ENCODE measurements at regions of chr12 and their contacts with region 1.

Region 1: GRCh38 chr12:76586764-76587395 is 27.3 kb upstream of the OSBPL8 start:
- DNase-seq: peak; percentile 43
- H3K4me3 ChIP-seq: no peak overlapping the region
- H3K27ac ChIP-seq: no peak overlapping the region
- H3K4me1 ChIP-seq: peaks cover 7% of the 10 kb centered on the region
- H3K27me3 ChIP-seq: no peaks in the 10 kb centered on the region
- CTCF ChIP-seq: peak; percentile 73 to 74

Region 2: DNA sequence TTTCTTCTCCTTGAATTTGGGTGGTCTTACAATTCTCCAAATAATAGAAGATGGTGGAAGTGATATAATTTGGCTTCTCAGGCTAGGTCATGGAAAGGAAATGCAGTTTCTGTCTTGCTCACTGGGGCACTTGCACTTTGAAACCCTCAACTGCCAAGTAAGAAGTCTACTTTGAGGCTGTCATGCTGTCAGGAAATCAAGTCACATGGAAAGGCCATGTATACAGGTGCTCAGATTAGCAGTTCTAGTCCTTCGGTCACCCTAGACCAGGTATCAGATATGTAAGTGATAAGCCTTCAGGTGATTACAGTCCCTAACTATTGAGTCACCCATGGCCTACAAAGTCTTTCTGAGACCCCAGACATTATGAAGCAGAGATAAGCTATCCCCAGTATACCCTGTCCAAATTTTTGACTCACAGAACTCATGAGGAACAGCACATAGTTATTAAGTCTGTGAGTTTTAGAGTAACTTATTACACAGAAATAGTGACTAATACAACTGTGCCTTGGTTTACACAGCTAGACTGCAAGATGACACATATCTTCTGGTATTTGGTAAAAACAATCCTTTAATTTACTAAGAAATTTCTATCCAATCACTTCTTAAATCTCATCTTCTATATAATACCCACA is 212.4 kb before region 1 on chr12:
- CTCF ChIA-PET with region 1: no interaction called
- dilution Hi-C with region 1: no loop called
- in situ Hi-C with region 1: no loop called
- intact Hi-C with region 1: loop called (anchors 10 kb)
- DNase-seq: peak; percentile 19
- H3K4me3 ChIP-seq: no peak overlapping the region
- H3K27ac ChIP-seq: no peak overlapping the region
- H3K4me1 ChIP-seq: peaks cover 16% of the 10 kb centered on the region
- H3K27me3 ChIP-seq: no peaks in the 10 kb centered on the region
- CTCF ChIP-seq: no peak

Region 3: DNA sequence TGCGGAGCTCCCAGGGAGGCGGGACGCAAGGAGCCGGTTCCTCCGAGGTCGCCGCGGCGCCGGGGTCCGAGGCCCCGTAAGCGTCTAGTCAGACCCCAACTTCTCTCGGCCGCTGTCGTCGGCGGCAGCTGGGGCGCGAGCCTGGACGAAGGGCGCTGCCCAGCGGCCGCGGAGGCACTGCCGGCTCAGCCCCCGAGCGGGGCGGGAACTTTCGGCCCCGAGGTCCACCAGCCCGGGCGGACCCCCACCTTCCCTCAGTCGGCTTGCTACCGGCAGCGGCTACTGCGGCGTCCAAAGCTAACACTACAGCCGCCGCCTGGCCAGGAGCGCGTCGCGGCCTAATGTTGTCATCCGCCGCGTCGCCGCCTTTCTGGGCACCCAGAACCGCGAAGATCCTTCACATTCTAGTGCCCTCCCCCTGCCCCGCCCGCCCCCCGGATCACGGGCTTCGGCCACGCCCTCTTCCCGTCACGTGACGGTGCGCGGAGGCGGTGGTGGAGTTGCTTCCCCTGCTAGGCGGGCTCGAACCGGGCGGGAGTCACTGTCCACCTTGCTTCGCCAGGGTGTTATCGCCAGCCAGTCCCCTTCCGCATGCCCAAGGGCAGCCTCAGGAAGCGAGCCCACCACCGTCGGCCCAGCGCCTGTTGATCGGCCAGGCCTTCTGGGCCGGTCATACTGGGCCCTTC is 27.3 kb before region 1 on chr12 and contains the start of gene OSBPL8:
- CTCF ChIA-PET with region 1: no interaction called
- dilution Hi-C with region 1: no loop called
- in situ Hi-C with region 1: no loop called
- intact Hi-C with region 1: loop called (anchors 1 kb)
- DNase-seq: peak; percentile 92
- H3K4me3 ChIP-seq: peak within 1 kb of the TSS; percentile 70 to 74 (median 74)
- H3K27ac ChIP-seq: peak within 1 kb of the TSS; percentile 89
- H3K4me1 ChIP-seq: peaks cover 5% of the 10 kb centered on the region
- H3K27me3 ChIP-seq: no peaks in the 10 kb centered on the region
- CTCF ChIP-seq: peak in 1 of 2 donors; percentile 31
- total RNA-seq, gene OSBPL8: 87.4 to 88.4 TPM

Region 4: DNA sequence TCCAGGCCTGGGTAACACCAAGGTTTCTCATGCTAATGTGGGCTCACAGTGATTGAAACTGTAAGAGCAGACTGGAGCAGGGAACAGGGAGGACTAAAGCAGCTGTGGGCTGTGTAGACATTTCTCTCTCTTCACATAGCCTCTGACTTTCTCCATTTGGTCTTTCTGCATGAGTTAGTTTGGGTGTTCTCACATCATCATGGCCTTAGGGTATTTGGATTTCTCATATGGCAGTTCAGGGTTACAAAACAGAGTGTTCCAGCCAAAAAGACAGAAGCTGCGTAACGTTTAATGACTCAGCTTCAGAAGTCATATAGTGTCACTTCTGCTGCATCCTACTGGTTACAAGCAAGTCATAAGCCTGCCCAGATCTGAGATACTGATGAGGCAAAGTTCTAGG is 24.7 kb after region 1 on chr12:
- CTCF ChIA-PET with region 1: no interaction called
- dilution Hi-C with region 1: no loop called
- in situ Hi-C with region 1: no loop called
- intact Hi-C with region 1: loop called (anchors 1 kb)
- DNase-seq: peak; percentile 98
- H3K4me3 ChIP-seq: no peak overlapping the region
- H3K27ac ChIP-seq: peak overlapping the region; percentile 5
- H3K4me1 ChIP-seq: peaks cover 19% of the 10 kb centered on the region
- H3K27me3 ChIP-seq: no peaks in the 10 kb centered on the region
- CTCF ChIP-seq: no peak

Region 5: GRCh38 chr12:77377116-77377515 is 790.2 kb after region 1 on chr12:
- CTCF ChIA-PET with region 1: no interaction called
- dilution Hi-C with region 1: no loop called
- in situ Hi-C with region 1: no loop called
- intact Hi-C with region 1: no loop called
- DNase-seq: peak; percentile 19
- H3K4me3 ChIP-seq: no peak overlapping the region
- H3K27ac ChIP-seq: no peak overlapping the region
- H3K4me1 ChIP-seq: peaks cover 9% of the 10 kb centered on the region
- H3K27me3 ChIP-seq: no peaks in the 10 kb centered on the region
- CTCF ChIP-seq: no peak